CD8-positive, alpha-beta T cell (primary cell): ENCODE measurements at regions of chr1 and their contacts with region 1.

Region 1: DNA sequence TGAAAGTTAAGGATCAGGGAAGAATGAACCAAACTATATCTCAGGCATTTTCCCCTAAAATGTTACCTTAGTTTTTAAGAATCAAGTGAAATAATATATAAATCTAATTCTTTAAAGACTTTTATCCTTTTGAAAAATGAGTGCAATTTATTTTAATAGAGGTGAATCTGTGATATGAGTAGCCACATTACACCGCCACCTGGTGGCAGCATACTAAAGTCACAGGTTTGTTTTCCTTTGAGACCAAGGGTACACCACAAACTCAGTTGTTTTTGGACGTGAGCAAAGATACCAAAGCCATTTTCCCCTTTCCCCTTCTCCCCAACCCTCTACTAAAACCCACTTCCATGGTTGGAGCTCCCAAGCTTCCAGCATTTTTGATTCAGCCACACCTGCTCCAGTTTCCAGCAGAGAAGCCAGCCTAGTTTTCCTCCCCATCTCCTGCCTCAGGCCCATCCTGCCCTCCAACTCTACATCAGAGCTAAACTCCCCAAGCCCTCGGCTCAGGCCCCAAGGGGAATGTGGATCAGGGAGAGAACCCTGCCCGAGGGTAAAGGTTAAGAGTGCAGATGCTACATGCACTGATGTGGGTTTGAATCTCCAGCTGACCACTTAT is 22.9 kb upstream of the LDLRAP1 start:
- DNase-seq: peak; percentile 52 to 88 (median 78)
- ATAC-seq: peak; percentile 73
- H3K4me3 ChIP-seq: no peak overlapping the region
- H3K4me3 Mint-ChIP-seq: no peak overlapping the region
- H3K27ac ChIP-seq: no peak overlapping the region
- H3K27ac Mint-ChIP-seq: peak overlapping the region; percentile 25
- H3K4me1 ChIP-seq: peaks cover 5% of the 10 kb centered on the region
- H3K4me1 Mint-ChIP-seq: peaks cover 10% of the 10 kb centered on the region
- H3K27me3 ChIP-seq: no peaks in the 10 kb centered on the region
- H3K27me3 Mint-ChIP-seq: no peaks in the 10 kb centered on the region
- CTCF ChIP-seq: peak; percentile 83

Region 2: DNA sequence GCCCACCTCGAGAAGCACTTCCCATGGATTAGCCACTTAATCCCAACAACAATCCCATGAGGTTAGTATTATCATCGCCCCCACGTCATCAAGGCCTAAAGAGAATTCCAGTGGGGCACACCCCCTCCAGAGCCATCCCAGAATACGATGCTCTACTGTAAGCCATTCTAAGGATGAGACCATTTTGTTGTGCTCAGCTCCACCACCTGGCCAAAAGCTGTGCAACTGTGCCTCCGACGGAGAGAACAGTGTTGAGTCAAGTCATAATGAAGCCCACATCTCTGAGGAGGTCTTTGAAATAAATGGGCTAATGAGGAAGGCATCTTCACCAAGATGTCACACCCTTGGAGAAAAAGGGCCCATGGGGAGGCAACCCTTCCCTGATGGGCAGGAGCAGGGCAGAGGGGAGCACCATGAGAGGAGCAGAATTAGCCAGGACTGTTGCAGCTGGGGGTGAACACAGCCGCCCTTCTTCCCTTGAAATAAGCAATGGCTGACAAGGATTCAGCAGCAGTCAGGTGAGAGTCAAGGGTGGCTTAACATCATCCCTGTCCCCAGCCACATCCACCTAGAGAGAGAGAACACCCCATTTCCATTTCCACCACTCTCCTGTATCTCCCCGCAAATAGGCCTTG is 302.8 kb before region 1 on chr1:
- CTCF ChIA-PET with region 1: no interaction called
- POLR2A ChIA-PET with region 1: no interaction called
- intact Hi-C with region 1: no loop called
- DNase-seq: no peak
- ATAC-seq: no peak
- H3K4me3 ChIP-seq: no peak overlapping the region
- H3K4me3 Mint-ChIP-seq: no peak overlapping the region
- H3K27ac ChIP-seq: no peak overlapping the region
- H3K27ac Mint-ChIP-seq: peak overlapping the region; percentile 5
- H3K4me1 ChIP-seq: no peaks in the 10 kb centered on the region
- H3K4me1 Mint-ChIP-seq: no peaks in the 10 kb centered on the region
- H3K27me3 ChIP-seq: no peaks in the 10 kb centered on the region
- H3K27me3 Mint-ChIP-seq: no peaks in the 10 kb centered on the region
- CTCF ChIP-seq: no peak

Region 3: DNA sequence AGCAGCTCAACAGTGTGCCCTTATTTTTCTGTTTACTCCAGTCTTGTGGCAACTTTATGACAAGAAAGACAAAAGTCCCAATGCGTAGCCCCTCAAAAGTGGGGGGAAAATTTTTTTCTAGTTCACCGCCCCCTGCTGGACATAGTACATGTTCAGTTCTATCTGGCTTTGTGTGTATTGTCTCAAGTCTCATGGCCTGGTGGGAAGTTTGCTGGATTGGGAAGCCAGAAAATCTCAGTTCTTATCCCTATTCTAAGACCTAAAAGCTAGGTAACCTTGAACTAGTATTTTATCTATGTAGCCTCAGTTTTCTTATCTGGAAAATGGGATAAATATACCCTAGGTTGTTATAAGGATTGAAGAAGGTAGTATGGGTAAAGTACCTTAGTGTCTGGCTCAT is 32.9 kb before region 1 on chr1:
- CTCF ChIA-PET with region 1: interaction called, 31 read pairs
- POLR2A ChIA-PET with region 1: no interaction called
- intact Hi-C with region 1: no loop called
- DNase-seq: peak in 7 of 9 experiments; percentile 16 to 61 (median 55)
- ATAC-seq: peak; percentile 54
- H3K4me3 ChIP-seq: no peak overlapping the region
- H3K4me3 Mint-ChIP-seq: no peak overlapping the region
- H3K27ac ChIP-seq: no peak overlapping the region
- H3K27ac Mint-ChIP-seq: no peak overlapping the region
- H3K4me1 ChIP-seq: no peaks in the 10 kb centered on the region
- H3K4me1 Mint-ChIP-seq: peaks cover 12% of the 10 kb centered on the region
- H3K27me3 ChIP-seq: no peaks in the 10 kb centered on the region
- H3K27me3 Mint-ChIP-seq: no peaks in the 10 kb centered on the region
- CTCF ChIP-seq: peak; percentile 74

Region 4: DNA sequence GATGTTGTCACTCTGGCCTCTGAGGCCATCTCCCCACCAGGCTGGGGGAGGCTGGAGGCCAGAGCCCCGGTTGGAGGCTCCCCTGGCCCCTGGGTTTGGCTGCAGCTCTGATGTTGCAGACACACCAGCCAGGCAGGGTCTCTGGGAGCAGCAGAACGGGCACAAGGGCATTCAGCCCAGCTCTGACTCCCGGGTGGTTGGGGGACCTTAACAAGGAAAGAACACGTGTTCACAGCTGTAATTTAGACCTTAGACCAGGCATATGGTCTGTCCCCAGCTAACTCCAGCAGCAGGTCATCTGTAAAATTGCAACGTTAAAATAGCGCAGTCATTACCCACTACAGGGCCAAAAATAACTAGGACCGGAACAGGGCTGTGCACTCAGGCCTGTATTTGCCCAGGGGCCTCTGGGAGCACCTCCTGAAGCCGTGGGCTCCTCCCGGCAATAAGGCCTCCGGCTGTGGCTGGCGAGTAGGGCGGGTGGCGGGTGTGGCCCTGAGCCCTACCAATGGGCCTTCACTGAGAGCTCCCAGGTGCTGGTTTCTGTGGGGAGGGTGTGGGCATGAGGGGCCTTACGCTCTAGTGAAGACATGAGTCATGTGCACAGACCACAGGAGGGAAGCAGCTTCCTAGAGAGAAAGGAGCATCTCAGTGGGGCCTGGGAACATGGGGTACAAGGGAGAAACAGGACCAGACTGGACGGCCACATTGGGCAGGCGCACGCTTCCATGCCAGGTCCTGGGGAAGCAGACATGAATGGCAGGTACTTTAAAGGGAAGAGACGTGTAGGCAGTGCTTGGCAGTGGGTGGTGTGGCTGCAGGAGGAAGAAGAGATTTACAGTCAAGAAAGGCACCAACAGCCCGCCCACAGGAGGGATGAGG is 29.0 kb after region 1 on chr1:
- CTCF ChIA-PET with region 1: interaction called, 25 read pairs
- POLR2A ChIA-PET with region 1: interaction called, 4 read pairs
- intact Hi-C with region 1: no loop called
- DNase-seq: peak; percentile 32 to 86 (median 80)
- ATAC-seq: peak; percentile 93
- H3K4me3 ChIP-seq: peak overlapping the region; percentile 19 to 36
- H3K4me3 Mint-ChIP-seq: peak overlapping the region; percentile 77
- H3K27ac ChIP-seq: peak overlapping the region; percentile 57 to 65
- H3K27ac Mint-ChIP-seq: peak overlapping the region; percentile 96
- H3K4me1 ChIP-seq: peaks cover 96% of the 10 kb centered on the region
- H3K4me1 Mint-ChIP-seq: peaks cover 96% of the 10 kb centered on the region
- H3K27me3 ChIP-seq: no peaks in the 10 kb centered on the region
- H3K27me3 Mint-ChIP-seq: no peaks in the 10 kb centered on the region
- CTCF ChIP-seq: no peak

Region 5: GRCh38 chr1:25572708-25573600 is 52.4 kb after region 1 on chr1:
- CTCF ChIA-PET with region 1: interaction called, 40 read pairs
- POLR2A ChIA-PET with region 1: no interaction called
- intact Hi-C with region 1: no loop called
- DNase-seq: peak in 7 of 9 experiments; percentile 25 to 70 (median 60)
- ATAC-seq: peak; percentile 78
- H3K4me3 ChIP-seq: no peak overlapping the region
- H3K4me3 Mint-ChIP-seq: no peak overlapping the region
- H3K27ac ChIP-seq: no peak overlapping the region
- H3K27ac Mint-ChIP-seq: peak overlapping the region; percentile 66
- H3K4me1 ChIP-seq: peaks cover 57% of the 10 kb centered on the region
- H3K4me1 Mint-ChIP-seq: peaks cover 62% of the 10 kb centered on the region
- H3K27me3 ChIP-seq: no peaks in the 10 kb centered on the region
- H3K27me3 Mint-ChIP-seq: no peaks in the 10 kb centered on the region
- CTCF ChIP-seq: peak; percentile 75

Region 6: GRCh38 chr1:25810341-25811299 is 290.1 kb after region 1 on chr1:
- CTCF ChIA-PET with region 1: interaction called, 40 read pairs
- POLR2A ChIA-PET with region 1: no interaction called
- intact Hi-C with region 1: loop called in 1 of 2 experiments (anchors 1 kb)
- DNase-seq: peak; percentile 67 to 91 (median 82)
- ATAC-seq: peak; percentile 98
- H3K4me3 ChIP-seq: no peak overlapping the region
- H3K4me3 Mint-ChIP-seq: no peak overlapping the region
- H3K27ac ChIP-seq: no peak overlapping the region
- H3K27ac Mint-ChIP-seq: no peak overlapping the region
- H3K4me1 ChIP-seq: peaks cover 5% of the 10 kb centered on the region
- H3K4me1 Mint-ChIP-seq: peaks cover 5% of the 10 kb centered on the region
- H3K27me3 ChIP-seq: no peaks in the 10 kb centered on the region
- H3K27me3 Mint-ChIP-seq: no peaks in the 10 kb centered on the region
- CTCF ChIP-seq: peak; percentile 98